H1 (cell line): ENCODE measurements at regions of chr17 and their contacts with region 1.

Region 1: DNA sequence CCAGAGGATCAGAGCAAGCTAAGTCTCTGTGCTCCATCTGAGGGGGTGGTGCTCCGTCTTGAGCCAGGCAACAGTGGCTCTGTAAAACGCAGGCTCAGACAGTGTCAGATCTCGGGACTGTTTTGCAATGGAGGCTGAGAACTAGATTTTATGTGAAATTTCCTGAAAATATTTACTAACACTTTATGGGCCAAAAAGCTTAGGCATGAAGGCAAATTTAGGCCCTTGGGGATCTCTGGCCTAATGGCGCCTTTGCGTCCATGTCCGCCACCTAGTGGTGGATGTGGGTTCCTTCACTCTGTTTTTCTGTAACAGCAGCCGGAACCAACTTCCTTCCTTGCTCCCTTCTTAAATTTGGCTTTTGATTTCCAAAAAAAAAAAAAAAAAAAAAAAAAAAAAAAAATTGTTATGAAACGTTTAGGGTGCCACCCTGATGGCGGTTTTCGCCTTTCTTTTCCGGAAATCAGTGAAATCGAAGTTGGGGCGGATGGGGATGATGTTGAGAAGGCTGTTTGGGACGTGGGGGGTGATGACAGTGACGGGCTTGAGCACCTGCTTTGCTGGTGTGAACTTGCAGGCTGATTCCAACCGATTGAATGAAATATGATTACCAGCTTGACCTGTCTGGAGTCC is 14.0 kb upstream of the ELAC2 start:
- DNase-seq: peak in 1 of 2 experiments; percentile 66
- H3K4me3 ChIP-seq: no peak overlapping the region
- H3K27ac ChIP-seq: no peak overlapping the region
- H3K4me1 ChIP-seq: no peaks in the 10 kb centered on the region
- H3K27me3 ChIP-seq: no peaks in the 10 kb centered on the region
- CTCF ChIP-seq: peak; percentile 63 to 83 (median 74)
- EP300 ChIP-seq: no peak
- POLR2A ChIP-seq: no peak
- RAD21 ChIP-seq: peak; percentile 34 to 39; a peak in 2 of 4 replicates

Region 2: GRCh38 chr17:12727096-12727760 is 304.6 kb before region 1 on chr17:
- CTCF ChIA-PET with region 1: no interaction called
- POLR2A ChIA-PET with region 1: no interaction called
- DNase-seq: no peak
- H3K4me3 ChIP-seq: no peak overlapping the region
- H3K27ac ChIP-seq: no peak overlapping the region
- H3K4me1 ChIP-seq: peaks cover 0 to 6% (median 2%) of the 10 kb centered on the region in 4 experiments; a peak in 5 of 7 replicates
- H3K27me3 ChIP-seq: no peaks in the 10 kb centered on the region
- CTCF ChIP-seq: no peak
- EP300 ChIP-seq: no peak
- POLR2A ChIP-seq: no peak
- RAD21 ChIP-seq: no peak

Region 3: DNA sequence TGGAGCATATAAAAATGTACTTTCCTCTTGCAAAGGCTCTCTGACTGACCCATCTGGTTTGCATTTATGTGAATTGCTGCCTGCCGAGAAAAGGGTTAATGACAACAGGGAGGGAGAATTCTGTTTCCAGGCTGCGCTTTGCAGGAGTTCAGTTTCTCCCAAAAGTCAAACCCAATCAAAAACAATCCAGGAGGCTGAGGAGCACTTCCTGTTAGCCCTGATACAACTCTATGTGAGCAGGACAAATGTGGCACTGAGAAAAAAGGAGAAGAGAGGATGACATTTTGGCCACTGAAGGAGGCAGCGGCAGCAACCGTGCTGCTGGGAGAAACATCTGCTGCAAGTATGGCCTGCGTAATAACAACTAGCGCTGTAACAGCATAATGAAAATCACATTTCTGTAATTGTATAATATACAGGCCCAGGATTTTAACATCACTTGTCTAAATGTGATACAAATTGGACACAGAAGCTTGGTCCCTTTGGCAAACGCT is 12.8 kb after region 1 on chr17:
- CTCF ChIA-PET with region 1: interaction called, 52 read pairs
- POLR2A ChIA-PET with region 1: no interaction called
- DNase-seq: no peak
- H3K4me3 ChIP-seq: no peak overlapping the region
- H3K27ac ChIP-seq: no peak overlapping the region
- H3K4me1 ChIP-seq: no peaks in the 10 kb centered on the region
- H3K27me3 ChIP-seq: no peaks in the 10 kb centered on the region
- CTCF ChIP-seq: no peak
- EP300 ChIP-seq: no peak
- POLR2A ChIP-seq: no peak
- RAD21 ChIP-seq: no peak

Region 4: DNA sequence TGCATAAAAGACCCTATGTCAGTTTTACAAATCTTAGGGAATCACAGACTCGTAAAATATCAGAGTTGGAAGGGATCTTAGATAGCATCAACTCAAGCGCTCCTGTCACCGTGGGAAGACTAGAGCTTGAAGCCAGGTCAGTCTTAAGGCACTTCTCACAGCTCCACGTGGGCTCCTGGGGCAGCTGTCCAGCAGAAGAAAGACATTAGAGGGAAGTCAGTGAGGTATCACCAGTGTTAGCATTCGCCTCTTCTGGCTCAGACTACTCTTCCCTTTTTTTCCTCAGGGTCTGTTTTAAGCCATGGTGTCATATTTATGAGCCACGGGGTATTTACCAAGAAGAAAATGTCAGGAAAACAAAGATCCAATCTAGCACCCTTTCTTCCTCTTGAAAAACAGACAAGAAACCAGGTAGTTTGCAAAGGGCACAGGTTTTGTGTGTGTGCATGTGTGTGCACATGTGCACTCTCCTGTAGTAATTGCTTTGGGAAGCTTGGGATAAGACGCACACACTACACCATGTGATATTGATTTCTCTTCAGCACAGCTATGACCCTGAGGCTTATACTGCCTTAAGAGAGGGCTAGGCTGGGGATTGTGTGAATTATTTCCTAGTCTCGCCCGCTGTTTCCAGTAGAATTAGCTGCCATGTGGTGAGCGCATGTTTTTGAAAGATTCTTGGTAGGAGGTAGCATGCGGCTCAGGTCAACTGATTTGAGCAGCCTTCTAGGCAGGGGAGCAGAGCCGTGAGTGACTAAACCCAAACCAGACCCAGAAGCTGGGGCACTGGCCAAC is 47.0 kb after region 1 on chr17:
- CTCF ChIA-PET with region 1: interaction called, 11 read pairs
- POLR2A ChIA-PET with region 1: no interaction called
- DNase-seq: no peak
- H3K4me3 ChIP-seq: no peak overlapping the region
- H3K27ac ChIP-seq: no peak overlapping the region
- H3K4me1 ChIP-seq: no peaks in the 10 kb centered on the region
- H3K27me3 ChIP-seq: no peaks in the 10 kb centered on the region
- CTCF ChIP-seq: no peak
- EP300 ChIP-seq: no peak
- POLR2A ChIP-seq: no peak
- RAD21 ChIP-seq: no peak

Region 5: DNA sequence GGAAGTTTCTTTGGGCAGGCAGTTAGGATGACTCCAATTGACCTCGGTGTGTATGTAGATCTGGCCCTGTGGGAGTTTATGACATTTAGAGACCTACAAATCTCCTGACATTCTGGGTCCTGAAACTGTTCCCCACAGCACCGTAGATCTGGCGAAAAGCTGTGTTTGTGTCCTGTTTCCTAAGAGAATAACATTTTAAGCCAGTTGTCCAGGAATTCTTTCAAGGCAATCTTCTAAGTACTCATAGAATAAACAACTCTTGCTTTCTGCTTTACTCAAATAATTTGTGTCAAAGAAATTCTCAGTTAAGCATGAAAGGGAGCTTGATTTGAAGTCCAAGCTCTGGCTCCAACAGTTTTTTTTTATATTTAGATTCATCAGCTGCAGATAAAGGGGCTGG is 64.5 kb after region 1 on chr17:
- CTCF ChIA-PET with region 1: interaction called, 11 read pairs
- POLR2A ChIA-PET with region 1: no interaction called
- DNase-seq: no peak
- H3K4me3 ChIP-seq: no peak overlapping the region
- H3K27ac ChIP-seq: no peak overlapping the region
- H3K4me1 ChIP-seq: 0 out of 7 replicates have a peak, but pooled peaks cover 0 to 3% (median 0%) of the 10 kb centered on the region in 4 experiments
- H3K27me3 ChIP-seq: no peaks in the 10 kb centered on the region
- CTCF ChIP-seq: no peak
- EP300 ChIP-seq: no peak
- POLR2A ChIP-seq: no peak
- RAD21 ChIP-seq: no peak

Region 6: GRCh38 chr17:13114601-13115031 is 82.8 kb after region 1 on chr17:
- CTCF ChIA-PET with region 1: interaction called, 10 read pairs
- POLR2A ChIA-PET with region 1: no interaction called
- DNase-seq: peak; percentile 43 to 68
- H3K4me3 ChIP-seq: no peak overlapping the region; a peak in 1 of 8 replicates
- H3K27ac ChIP-seq: no peak overlapping the region
- H3K4me1 ChIP-seq: no peaks in the 10 kb centered on the region
- H3K27me3 ChIP-seq: peaks cover 0 to 1% (median 0%) of the 10 kb centered on the region in 4 experiments; a peak in 1 of 7 replicates
- CTCF ChIP-seq: peak; percentile 80 to 96 (median 87)
- EP300 ChIP-seq: no peak
- POLR2A ChIP-seq: no peak
- RAD21 ChIP-seq: peak; percentile 88